ENCODE measurements at regions of chr3 and their contacts with region 1.

Region 1: GRCh38 chr3:158845765-158846350 is 44.0 kb downstream of the MFSD1 start:
- DNase-seq: peak; percentile 76
- H3K4me3 Mint-ChIP-seq: no peak overlapping the region
- H3K27ac Mint-ChIP-seq: no peak overlapping the region
- H3K4me1 Mint-ChIP-seq: peaks cover 14% of the 10 kb centered on the region
- H3K27me3 Mint-ChIP-seq: no peaks in the 10 kb centered on the region

Region 2: DNA sequence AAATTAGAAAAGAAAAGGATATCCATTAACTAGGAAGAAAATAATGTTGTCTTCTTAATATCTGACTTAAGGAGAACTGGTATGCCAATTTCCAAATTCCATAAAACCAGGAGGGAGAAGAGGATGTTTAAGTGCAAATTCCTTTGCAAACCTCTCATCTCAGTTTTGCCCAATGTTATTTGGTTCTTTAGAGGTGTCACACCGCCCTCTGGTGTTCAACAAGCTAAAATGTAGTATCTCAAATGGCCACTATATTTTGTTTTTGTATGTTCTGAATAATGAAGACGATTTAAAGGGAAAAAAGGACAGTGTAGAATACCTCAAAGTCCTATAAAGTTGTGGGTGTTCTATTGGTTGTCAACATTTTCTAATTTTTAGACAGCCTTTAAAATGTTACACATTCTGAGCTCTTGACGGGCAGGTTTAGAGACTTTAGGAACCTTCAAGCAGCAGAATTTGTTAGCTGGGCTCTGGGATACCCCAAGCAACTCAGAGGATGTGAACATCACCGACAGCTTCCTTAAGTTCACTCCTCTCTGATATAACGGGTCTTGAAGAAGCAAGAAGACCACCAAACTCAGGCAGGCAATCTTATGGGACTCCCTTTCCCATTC is 414.3 kb after region 1 on chr3:
- intact Hi-C with region 1: loop called (anchors 1 kb)
- DNase-seq: peak; percentile 80
- H3K4me3 Mint-ChIP-seq: no peak overlapping the region
- H3K27ac Mint-ChIP-seq: no peak overlapping the region
- H3K4me1 Mint-ChIP-seq: no peaks in the 10 kb centered on the region
- H3K27me3 Mint-ChIP-seq: peaks cover 3% of the 10 kb centered on the region

Measured in activated CD4-positive, alpha-beta T cell treated with anti-CD3 and anti-CD28 coated beads, Interleukin-2, amount 10 ng/mL, durations not matched to agents 24 days and 14 days (primary cell).